PC-9 (cell line): ENCODE measurements at regions of chr5 and their contacts with region 1.

Region 1: DNA sequence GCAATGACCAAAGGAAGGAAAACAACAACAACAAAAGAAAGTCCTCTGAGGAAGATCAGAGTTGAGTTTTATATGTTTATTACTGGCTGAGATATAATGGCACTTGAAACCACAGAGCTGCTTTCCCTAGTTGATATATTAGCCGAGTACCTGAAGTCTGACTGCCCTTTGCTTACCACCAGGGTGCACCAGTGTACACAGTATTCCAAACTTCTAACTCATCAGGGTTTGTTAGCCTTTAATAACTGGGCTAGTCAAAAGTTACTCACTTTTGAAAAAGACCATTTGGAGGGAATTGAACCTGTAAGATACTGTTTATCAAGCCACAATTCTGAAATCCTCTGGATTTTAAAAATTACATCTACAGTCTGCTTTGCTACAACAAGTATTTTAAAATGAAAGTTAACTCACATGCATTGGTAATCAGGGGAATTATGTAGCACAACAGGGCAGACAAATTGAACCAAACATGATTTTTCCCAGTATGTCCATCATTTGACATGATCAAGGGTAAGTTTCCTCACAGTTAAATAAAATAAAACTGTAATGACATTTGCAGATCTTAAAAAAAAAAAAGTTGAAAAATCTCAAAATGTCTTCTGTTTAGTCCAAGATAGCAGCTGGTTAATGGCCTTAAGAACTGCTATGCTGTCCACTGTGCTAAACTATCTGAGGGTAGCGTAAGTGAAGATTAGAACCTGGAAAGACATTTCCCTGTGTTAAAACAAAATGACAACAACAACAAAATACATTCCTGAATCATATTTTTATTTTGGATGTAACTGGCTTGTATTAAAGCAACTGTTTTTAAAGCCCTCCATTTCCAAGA is 57.3 kb upstream of the C6 start:
- DNase-seq: peak; percentile 41
- H3K4me3 ChIP-seq: no peak overlapping the region
- H3K27ac ChIP-seq: no peak overlapping the region
- H3K4me1 ChIP-seq: no peaks in the 10 kb centered on the region
- H3K27me3 ChIP-seq: no peaks in the 10 kb centered on the region
- CTCF ChIP-seq: peak; percentile 83

Region 2: DNA sequence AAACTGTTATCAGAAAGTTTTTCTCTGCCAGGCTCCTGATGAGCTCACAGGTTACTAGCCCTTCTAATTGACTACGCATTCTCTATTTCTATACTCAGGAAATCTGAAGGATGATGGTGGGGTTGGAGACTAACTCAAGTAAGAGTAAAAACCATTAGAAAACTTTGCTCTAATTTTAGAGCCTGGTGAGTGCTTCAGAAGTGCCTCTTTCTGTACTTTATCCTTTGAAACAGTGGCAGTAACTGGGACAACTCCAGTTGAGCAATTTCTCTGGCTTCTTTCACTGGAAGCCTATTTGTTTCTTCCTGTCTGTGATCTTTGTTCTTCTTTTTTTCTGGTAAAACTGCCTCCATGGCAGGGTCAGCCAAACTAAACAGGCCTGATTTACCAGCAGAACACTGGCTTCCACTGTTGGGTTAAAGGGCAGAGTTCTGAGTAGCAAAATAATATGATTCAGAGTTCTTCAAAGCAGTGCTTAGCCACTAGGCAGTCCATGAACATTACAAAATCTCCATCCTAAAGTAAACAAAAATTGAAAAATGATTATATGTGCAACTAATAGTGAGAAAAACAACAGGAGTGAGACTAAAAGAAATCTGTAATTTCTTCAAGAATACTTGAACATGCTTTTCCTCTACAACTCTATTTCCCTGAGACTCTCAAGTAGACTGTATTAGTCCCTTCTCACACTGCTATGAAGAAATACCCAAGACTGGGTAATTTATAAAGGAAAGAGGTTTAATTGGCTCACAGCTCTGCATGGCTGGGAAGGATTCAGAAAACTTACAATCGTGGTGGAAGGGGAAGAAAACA is 279.3 kb before region 1 on chr5:
- CTCF ChIA-PET with region 1: no interaction called
- POLR2A ChIA-PET with region 1: no interaction called
- intact Hi-C with region 1: no loop called
- DNase-seq: peak; percentile 50 to 91
- H3K4me3 ChIP-seq: peak overlapping the region; percentile 7; the same call in 1 of the 2 replicates
- H3K27ac ChIP-seq: peak overlapping the region; percentile 60
- H3K4me1 ChIP-seq: peaks cover 38% of the 10 kb centered on the region
- H3K27me3 ChIP-seq: no peaks in the 10 kb centered on the region
- CTCF ChIP-seq: no peak

Region 3: GRCh38 chr5:41193456-41194205 is 77.0 kb before region 1 on chr5:
- CTCF ChIA-PET with region 1: interaction called, 13 read pairs
- POLR2A ChIA-PET with region 1: no interaction called
- intact Hi-C with region 1: no loop called
- DNase-seq: peak in 1 of 2 experiments; percentile 17
- H3K4me3 ChIP-seq: no peak overlapping the region
- H3K27ac ChIP-seq: no peak overlapping the region
- H3K4me1 ChIP-seq: no peaks in the 10 kb centered on the region
- H3K27me3 ChIP-seq: no peaks in the 10 kb centered on the region
- CTCF ChIP-seq: no peak

Region 4: DNA sequence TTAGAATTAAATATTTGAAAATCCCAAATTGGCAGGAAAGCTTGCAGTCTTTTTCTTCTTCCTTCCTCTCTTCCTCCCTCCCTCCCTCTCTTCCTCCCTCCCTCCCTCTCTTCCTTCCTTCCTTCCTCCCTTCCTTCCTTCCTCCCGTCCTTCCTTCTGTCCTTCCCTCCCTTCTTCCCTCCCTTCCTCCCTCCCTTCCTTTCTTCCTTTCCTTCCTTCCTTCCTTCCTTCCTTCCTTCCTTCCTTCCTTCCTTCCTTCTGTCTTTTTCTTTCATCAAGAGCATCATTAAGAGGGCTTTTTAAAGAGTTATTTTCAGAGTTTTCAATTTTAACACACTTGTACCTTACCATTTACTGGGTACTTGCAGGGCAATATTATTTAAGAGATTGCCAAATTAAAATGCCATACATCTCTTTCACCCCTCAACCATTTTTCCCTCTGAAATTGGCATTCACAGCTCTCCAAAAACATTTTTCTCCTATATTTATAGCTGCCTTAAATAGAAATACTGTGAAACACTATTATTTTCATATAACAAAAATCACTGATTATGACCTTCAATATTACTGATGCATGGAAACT is 41.9 kb after region 1 on chr5:
- CTCF ChIA-PET with region 1: no interaction called
- POLR2A ChIA-PET with region 1: no interaction called
- intact Hi-C with region 1: no loop called
- DNase-seq: no peak
- H3K4me3 ChIP-seq: no peak overlapping the region
- H3K27ac ChIP-seq: no peak overlapping the region
- H3K4me1 ChIP-seq: no peaks in the 10 kb centered on the region
- H3K27me3 ChIP-seq: no peaks in the 10 kb centered on the region
- CTCF ChIP-seq: no peak

Region 5: DNA sequence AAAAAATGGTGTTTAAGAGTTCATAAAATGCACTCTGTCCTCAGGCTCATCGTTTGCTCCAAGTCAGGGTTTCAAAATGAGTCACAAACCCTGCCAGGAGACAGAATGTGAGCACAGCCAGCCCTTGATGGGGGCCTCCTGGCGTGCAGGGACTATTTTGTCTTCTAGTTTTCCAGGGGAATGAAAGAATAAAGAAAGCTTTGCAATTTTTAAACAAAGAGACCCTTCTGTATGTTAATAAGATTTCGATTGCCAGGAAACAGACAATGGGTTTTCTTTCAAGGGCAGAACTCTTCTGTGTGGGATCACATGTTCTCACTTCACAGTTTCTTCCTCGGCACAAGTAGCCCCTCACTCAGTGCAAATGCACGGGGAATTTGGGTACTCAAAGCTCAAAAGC is 64.1 kb after region 1 on chr5:
- CTCF ChIA-PET with region 1: no interaction called
- POLR2A ChIA-PET with region 1: no interaction called
- intact Hi-C with region 1: no loop called
- DNase-seq: no peak
- H3K4me3 ChIP-seq: no peak overlapping the region
- H3K27ac ChIP-seq: no peak overlapping the region
- H3K4me1 ChIP-seq: no peaks in the 10 kb centered on the region
- H3K27me3 ChIP-seq: no peaks in the 10 kb centered on the region
- CTCF ChIP-seq: no peak

Region 6: GRCh38 chr5:41524174-41524573 is 253.5 kb after region 1 on chr5:
- CTCF ChIA-PET with region 1: no interaction called
- POLR2A ChIA-PET with region 1: no interaction called
- intact Hi-C with region 1: loop called (anchors 1 kb)
- DNase-seq: no peak
- H3K4me3 ChIP-seq: no peak overlapping the region
- H3K27ac ChIP-seq: no peak overlapping the region
- H3K4me1 ChIP-seq: peaks cover 17% of the 10 kb centered on the region
- H3K27me3 ChIP-seq: no peaks in the 10 kb centered on the region
- CTCF ChIP-seq: peak; percentile 41; the same call in 1 of the 2 replicates

Region 7: GRCh38 chr5:41641621-41642020 is 371.0 kb after region 1 on chr5:
- CTCF ChIA-PET with region 1: interaction called, 4 read pairs
- POLR2A ChIA-PET with region 1: no interaction called
- intact Hi-C with region 1: loop called (anchors 1 kb)
- DNase-seq: no peak
- H3K4me3 ChIP-seq: no peak overlapping the region
- H3K27ac ChIP-seq: no peak overlapping the region
- H3K4me1 ChIP-seq: no peaks in the 10 kb centered on the region
- H3K27me3 ChIP-seq: no peaks in the 10 kb centered on the region
- CTCF ChIP-seq: peak; percentile 63